Calu3 (cell line): ENCODE measurements at regions of chr9 and their contacts with region 1.

Region 1: DNA sequence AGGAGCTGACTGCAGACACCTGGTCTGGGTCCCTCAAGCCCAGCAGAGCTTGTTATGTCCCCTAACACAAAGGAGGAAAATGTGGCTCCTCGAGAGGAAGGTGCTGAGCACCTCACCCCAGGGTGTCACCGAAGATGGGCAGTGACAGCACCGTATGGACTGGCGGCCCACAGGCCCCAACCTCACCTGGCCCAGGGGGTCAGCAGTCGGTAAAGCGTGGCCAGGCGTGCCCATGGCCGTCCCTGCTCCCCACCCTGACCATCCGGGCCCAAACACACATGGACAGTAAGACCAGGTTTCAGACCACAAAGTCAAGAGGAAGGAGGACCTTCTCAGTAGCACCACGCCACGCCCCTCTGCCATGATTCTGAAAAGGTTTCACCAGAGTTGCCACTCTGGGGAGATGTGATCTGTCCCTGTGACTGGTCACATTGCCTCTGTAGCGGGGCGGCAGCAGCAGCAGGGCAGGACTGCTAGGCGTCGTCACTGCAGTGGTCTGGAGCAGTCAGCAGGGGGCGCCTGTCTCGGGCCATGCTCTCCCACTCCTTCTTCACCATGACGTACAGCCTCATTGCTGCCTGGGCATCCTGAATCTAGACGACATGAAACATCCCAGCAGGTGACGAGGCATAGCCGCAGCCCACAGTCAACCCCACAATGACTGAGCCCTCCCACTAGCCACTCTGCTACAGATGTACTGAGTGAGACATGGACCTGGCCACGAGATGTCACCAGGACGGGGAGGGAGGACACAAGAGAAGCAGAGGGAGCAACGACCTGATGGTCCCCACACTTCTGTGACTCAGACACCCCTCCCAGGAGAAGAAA is 11.1 kb downstream of the REXO4 start:
- DNase-seq: peak; percentile 74
- H3K4me3 Mint-ChIP-seq: no peak overlapping the region
- H3K27ac Mint-ChIP-seq: no peak overlapping the region
- H3K4me1 Mint-ChIP-seq: no peaks in the 10 kb centered on the region
- H3K27me3 Mint-ChIP-seq: no peaks in the 10 kb centered on the region
- CTCF ChIP-seq: no peak

Region 2: GRCh38 chr9:133309608-133310007 is 97.1 kb before region 1 on chr9:
- CTCF ChIA-PET with region 1: no interaction called
- intact Hi-C with region 1: no loop called
- DNase-seq: no peak
- H3K4me3 Mint-ChIP-seq: no peak overlapping the region
- H3K27ac Mint-ChIP-seq: no peak overlapping the region
- H3K4me1 Mint-ChIP-seq: no peaks in the 10 kb centered on the region
- H3K27me3 Mint-ChIP-seq: peaks cover 60% of the 10 kb centered on the region
- CTCF ChIP-seq: no peak

Region 3: GRCh38 chr9:133347985-133348717 is 58.5 kb before region 1 on chr9 and contains the starts of genes MED22 and RPL7A:
- CTCF ChIA-PET with region 1: no interaction called
- intact Hi-C with region 1: loop called (anchors 10 kb)
- DNase-seq: peak; percentile 81
- H3K4me3 Mint-ChIP-seq: peak within 1 kb of the TSS; percentile 82
- H3K27ac Mint-ChIP-seq: peak within 1 kb of the TSS; percentile 92
- H3K4me1 Mint-ChIP-seq: peaks cover 9% of the 10 kb centered on the region
- H3K27me3 Mint-ChIP-seq: no peaks in the 10 kb centered on the region
- CTCF ChIP-seq: no peak
- total RNA-seq, gene MED22: 24.4 and 27.6 TPM in 2 replicates
- total RNA-seq, gene RPL7A: 835 and 904 TPM in 2 replicates

Region 4: GRCh38 chr9:133839822-133840329 is 433.2 kb after region 1 on chr9:
- CTCF ChIA-PET with region 1: no interaction called
- intact Hi-C with region 1: no loop called
- DNase-seq: no peak
- H3K4me3 Mint-ChIP-seq: no peak overlapping the region
- H3K27ac Mint-ChIP-seq: no peak overlapping the region
- H3K4me1 Mint-ChIP-seq: no peaks in the 10 kb centered on the region
- H3K27me3 Mint-ChIP-seq: no peaks in the 10 kb centered on the region
- CTCF ChIP-seq: no peak

Region 5: GRCh38 chr9:133897648-133898047 is 491.0 kb after region 1 on chr9:
- CTCF ChIA-PET with region 1: no interaction called
- intact Hi-C with region 1: no loop called
- DNase-seq: no peak
- H3K4me3 Mint-ChIP-seq: no peak overlapping the region
- H3K27ac Mint-ChIP-seq: no peak overlapping the region
- H3K4me1 Mint-ChIP-seq: peaks cover 7% of the 10 kb centered on the region
- H3K27me3 Mint-ChIP-seq: no peaks in the 10 kb centered on the region
- CTCF ChIP-seq: no peak